ENCODE measurements at regions of chr5 and their contacts with region 1.

Region 1: GRCh38 chr5:177098470-177099141 is 11.9 kb downstream of the FGFR4 start:
- DNase-seq: no peak
- H3K4me3 ChIP-seq: no peak overlapping the region
- H3K27ac ChIP-seq: no peak overlapping the region
- H3K4me1 ChIP-seq: peaks cover 20% of the 10 kb centered on the region
- H3K27me3 ChIP-seq: no peaks in the 10 kb centered on the region
- CTCF ChIP-seq: no peak
- POLR2A ChIP-seq: no peak

Region 2: DNA sequence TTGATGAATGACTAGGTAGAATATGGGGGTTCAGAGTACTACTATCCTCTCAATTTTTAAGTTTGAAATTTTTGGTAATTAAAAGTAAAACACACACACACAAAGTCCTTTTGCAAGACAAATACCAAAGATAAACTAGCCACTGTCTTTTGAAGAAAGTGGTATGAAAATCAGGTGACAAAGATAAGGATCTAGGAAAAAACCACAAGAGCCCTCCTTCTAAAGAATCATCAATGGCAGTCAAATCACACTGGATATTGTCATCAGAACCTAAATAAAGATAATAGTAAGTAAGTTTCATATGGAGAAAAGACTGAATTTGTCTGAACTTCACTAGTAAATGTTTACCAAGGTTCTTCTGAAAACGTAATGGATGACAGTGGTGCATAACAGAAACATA is 169.0 kb before region 1 on chr5:
- CTCF ChIA-PET with region 1: no interaction called
- POLR2A ChIA-PET with region 1: no interaction called
- dilution Hi-C with region 1: no loop called
- intact Hi-C with region 1: no loop called
- DNase-seq: no peak
- H3K4me3 ChIP-seq: no peak overlapping the region
- H3K27ac ChIP-seq: no peak overlapping the region
- H3K4me1 ChIP-seq: no peaks in the 10 kb centered on the region
- H3K27me3 ChIP-seq: no peaks in the 10 kb centered on the region
- CTCF ChIP-seq: no peak
- POLR2A ChIP-seq: no peak

Region 3: DNA sequence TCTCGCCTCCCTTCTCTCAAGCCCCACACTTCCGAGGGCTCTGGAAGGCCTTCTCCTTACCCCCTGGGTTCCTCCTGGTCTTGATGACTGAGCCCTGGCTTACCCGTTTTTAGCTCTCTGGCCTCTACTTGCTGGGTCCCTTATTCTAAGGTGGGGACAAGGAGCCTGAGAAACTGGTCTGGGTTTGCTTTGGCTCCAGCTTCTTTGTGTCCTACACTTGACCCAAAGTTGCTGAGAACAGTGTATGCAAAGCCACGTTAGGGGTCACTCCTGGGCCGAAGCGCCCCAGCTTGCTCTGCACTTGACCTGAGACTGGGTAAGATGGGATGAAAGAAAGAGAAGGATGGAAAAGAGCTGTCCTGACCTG is 75.3 kb before region 1 on chr5:
- CTCF ChIA-PET with region 1: no interaction called
- POLR2A ChIA-PET with region 1: no interaction called
- dilution Hi-C with region 1: no loop called
- intact Hi-C with region 1: no loop called
- DNase-seq: peak; percentile 50
- H3K4me3 ChIP-seq: peak overlapping the region; percentile 57 to 94 (median 87)
- H3K27ac ChIP-seq: peak overlapping the region; percentile 46
- H3K4me1 ChIP-seq: peaks cover 9% of the 10 kb centered on the region
- H3K27me3 ChIP-seq: no peaks in the 10 kb centered on the region
- CTCF ChIP-seq: no peak
- POLR2A ChIP-seq: no peak

Region 4: DNA sequence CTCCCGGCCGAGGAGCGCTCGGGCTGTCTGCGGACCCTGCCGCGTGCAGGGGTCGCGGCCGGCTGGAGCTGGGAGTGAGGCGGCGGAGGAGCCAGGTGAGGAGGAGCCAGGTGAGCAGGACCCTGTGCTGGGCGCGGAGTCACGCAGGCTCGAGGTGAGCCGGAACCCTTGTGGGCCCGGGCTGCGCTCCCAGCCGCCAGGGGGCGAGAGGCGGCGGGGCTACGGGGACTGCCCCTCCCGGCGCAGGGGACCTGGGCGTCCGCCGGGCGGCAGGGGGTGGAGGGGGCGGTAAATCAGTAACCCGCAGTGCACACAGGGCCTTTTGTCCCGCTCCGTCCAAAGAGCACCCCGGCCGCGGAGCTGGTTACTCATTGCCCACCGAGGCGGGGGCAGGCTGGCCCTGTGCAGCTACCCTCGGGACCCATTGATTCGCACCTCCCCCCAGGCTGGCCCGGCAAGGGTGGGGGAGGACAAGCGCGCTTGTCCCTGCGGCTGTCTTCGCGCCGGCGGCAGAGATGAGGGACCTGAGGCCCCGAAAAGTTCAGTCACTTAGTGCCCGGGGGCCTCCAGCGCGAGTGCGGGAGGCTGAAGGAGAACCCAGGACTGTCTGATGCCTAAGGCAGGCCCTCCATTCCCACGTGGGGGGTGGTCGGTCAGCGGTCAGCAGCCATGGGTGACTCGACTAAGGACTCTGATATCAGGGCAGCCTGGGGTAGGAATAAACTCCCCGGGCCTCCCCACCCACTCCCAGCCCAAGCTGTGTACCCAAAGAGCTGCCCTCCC is 11.5 kb before region 1 on chr5:
- CTCF ChIA-PET with region 1: interaction called, 10 read pairs
- POLR2A ChIA-PET with region 1: no interaction called
- dilution Hi-C with region 1: no loop called
- intact Hi-C with region 1: no loop called
- DNase-seq: peak; percentile 39
- H3K4me3 ChIP-seq: peak overlapping the region in 1 of 3 experiments; percentile 19
- H3K27ac ChIP-seq: no peak overlapping the region
- H3K4me1 ChIP-seq: peaks cover 15% of the 10 kb centered on the region
- H3K27me3 ChIP-seq: peaks cover 3 to 7% of the 10 kb centered on the region in 2 experiments
- CTCF ChIP-seq: peak; percentile 49 to 71
- POLR2A ChIP-seq: no peak

Region 5: DNA sequence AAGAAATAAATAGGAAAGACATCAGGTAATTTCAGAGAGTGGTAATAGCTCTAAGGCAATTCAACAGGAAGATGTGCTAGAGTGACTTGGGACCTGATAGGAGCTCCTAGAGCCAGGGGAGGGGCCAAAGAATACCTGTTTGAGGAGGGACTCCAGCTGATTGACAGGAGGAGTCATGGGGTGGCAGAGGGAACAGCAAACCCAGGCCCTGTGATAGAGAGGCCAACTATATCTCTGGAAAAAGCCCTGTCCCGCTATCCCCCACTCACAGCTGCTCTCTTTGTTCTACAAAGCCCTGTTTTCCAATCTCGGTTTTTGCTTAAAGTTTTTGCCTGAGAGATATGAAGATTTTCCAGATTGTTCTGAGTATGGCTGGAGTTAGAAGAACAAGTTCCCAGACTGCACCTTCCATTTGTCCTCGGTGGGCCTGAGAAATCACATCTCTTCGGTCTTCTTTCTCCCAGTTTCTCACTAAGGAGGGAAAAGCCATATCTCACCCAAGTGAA is 25.9 kb after region 1 on chr5:
- CTCF ChIA-PET with region 1: no interaction called
- POLR2A ChIA-PET with region 1: no interaction called
- dilution Hi-C with region 1: no loop called
- intact Hi-C with region 1: no loop called
- DNase-seq: no peak
- H3K4me3 ChIP-seq: no peak overlapping the region
- H3K27ac ChIP-seq: no peak overlapping the region
- H3K4me1 ChIP-seq: peaks cover 8% of the 10 kb centered on the region
- H3K27me3 ChIP-seq: no peaks in the 10 kb centered on the region
- CTCF ChIP-seq: no peak
- POLR2A ChIP-seq: no peak